ENCODE measurements at regions of chr4 and their contacts with region 1.

Region 1: DNA sequence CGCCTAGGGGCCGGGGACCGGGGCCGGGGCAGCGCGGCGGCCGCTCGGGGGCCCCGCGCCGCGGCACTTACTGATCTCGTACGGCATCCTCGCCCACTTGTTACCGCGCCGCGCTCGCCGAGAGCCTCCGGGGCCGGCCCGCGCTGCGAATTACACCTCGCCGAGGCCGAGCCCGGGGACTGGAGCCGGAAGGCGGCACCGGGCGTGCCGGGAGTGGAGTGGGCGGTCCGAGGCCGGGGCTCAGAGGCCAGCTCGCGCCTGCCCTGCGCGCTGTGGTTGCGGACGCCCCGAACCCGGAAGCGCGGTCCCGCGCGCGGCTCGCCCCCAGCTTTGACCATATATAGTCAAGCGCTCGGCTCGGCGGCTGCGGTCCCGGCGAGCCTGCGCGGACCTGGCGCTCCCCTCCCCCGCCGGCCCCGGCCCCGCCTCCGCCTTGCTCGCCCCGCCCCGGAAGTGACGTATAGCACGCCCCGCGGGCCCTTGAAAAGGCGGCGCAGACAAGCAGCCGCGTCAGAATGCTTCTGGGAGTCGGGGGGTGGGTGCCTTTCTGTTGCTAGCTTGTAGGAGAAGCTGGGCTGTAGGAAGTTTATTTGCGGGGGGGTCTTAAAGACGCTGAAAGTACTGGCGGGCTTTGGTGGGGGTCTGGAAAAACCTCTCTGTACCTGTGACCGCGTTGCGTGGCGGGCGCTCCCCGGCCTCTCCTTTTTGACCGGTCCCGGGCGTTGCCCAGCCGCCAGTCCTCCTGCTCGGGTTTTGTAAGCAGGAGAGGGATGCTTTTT is at the start of gene WDR1:
- DNase-seq: peak; percentile 95
- H3K4me3 ChIP-seq: peak within 1 kb of the TSS; percentile 79 to 88 (median 84)
- H3K27ac ChIP-seq: peak within 1 kb of the TSS; percentile 78
- H3K4me1 ChIP-seq: peaks cover 34% of the 10 kb centered on the region
- H3K27me3 ChIP-seq: no peaks in the 10 kb centered on the region
- CTCF ChIP-seq: no peak
- total RNA-seq, gene WDR1: 384 to 470 TPM

Region 2: DNA sequence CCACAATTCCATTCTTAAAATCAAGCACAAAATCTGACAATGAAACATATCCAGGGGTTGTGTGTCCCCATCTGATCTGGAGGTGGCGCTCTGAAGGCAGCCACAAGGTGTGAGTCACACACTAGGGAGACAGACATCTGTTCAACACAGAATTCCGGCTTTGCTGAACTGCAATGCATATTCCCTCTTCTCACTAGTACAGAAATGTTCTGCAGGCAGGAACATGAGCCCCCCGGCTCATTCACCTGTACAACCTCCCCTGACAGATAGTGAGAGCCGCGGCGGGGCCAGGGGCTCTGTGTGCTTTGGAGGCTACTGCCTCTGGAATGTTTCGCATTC is 42.0 kb before region 1 on chr4:
- CTCF ChIA-PET with region 1: no interaction called
- dilution Hi-C with region 1: no loop called
- in situ Hi-C with region 1: no loop called
- intact Hi-C with region 1: loop called (anchors 2 kb)
- DNase-seq: peak; percentile 46
- H3K4me3 ChIP-seq: no peak overlapping the region
- H3K27ac ChIP-seq: no peak overlapping the region
- H3K4me1 ChIP-seq: no peaks in the 10 kb centered on the region
- H3K27me3 ChIP-seq: no peaks in the 10 kb centered on the region
- CTCF ChIP-seq: peak; percentile 63 to 65

Region 3: GRCh38 chr4:10096201-10096977 is 20.4 kb before region 1 on chr4:
- CTCF ChIA-PET with region 1: no interaction called
- dilution Hi-C with region 1: no loop called
- in situ Hi-C with region 1: no loop called
- intact Hi-C with region 1: loop called (anchors 1 kb)
- DNase-seq: peak; percentile 97
- H3K4me3 ChIP-seq: no peak overlapping the region
- H3K27ac ChIP-seq: peak overlapping the region; percentile 86
- H3K4me1 ChIP-seq: peaks cover 84% of the 10 kb centered on the region
- H3K27me3 ChIP-seq: no peaks in the 10 kb centered on the region
- CTCF ChIP-seq: no peak

Region 4: DNA sequence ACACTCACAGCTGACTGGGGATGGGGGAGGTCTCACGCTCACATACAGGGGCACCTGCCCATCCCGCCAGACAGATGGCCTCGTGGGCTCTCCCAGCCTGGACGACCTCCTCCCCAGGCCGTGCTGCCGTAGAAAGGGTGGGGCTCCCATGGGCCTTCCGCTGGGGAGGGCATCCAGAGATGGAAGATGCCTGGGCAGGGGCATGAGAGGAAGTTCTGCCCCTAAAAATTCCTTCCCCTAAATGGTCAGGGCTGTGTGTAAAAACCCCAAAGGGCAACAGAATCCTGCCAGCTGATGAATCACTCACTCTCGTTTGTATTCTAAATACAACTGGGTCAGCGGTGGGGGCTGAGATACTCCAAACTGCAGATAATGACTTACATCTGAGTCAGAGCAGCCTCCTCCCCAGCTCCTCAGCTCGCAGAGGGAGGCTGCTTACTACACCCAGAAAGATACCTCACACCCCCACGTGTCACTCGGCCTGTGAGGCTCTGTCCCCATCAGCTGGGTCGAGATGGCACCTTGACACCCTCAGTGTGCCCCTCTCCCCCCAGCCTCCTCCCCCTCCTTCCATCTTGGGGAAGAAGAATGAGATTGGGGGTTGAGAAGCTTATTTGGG is 10.2 kb before region 1 on chr4:
- CTCF ChIA-PET with region 1: no interaction called
- dilution Hi-C with region 1: no loop called
- in situ Hi-C with region 1: no loop called
- intact Hi-C with region 1: loop called (anchors 1 kb)
- DNase-seq: peak; percentile 98
- H3K4me3 ChIP-seq: peak overlapping the region in 2 of 3 experiments; percentile 28 to 31
- H3K27ac ChIP-seq: peak overlapping the region; percentile 71
- H3K4me1 ChIP-seq: peaks cover 79% of the 10 kb centered on the region
- H3K27me3 ChIP-seq: no peaks in the 10 kb centered on the region
- CTCF ChIP-seq: no peak

Region 5: DNA sequence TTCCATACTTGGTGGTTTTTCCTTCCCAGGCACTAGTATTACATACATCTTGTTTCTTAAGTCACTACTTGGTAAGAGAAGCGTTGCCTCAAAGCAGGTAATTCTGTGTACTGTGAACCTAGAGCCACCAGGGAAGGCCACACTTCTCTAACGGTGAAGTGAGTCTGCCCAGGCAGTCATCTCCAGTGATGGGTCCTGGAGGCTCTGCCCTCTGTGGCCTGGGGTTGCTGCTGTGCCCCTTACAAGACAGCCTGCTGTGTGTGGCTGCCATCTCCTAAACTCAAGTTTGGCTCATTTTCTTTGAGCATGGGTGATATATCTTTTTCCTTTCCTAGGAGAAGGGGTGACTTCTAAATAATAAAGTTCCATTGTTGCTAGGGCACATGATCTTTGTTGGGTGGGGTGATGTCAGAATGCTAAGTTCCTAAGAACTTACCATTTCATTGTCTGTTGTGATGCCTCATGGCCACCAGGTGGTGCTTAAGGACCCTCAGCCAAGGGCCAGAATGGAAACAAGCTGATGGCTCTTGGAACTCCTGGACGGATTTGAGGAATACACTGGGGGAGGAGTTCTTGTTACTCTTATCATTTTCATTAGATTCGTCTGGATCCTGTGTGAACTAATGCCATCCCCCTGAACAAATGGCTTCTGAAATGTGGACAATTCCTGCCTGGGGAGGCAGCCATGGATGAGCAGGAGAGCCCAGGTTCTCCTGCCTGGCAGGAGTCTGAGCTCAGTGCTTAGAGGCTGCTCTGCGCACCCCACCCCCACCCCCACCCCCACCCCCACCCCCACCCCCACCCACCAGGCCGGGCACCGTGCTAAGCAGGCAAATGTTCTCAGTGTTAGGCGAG is 40.9 kb after region 1 on chr4:
- CTCF ChIA-PET with region 1: interaction called, 10 read pairs
- dilution Hi-C with region 1: no loop called
- in situ Hi-C with region 1: no loop called
- intact Hi-C with region 1: no loop called
- DNase-seq: peak; percentile 71
- H3K4me3 ChIP-seq: no peak overlapping the region
- H3K27ac ChIP-seq: no peak overlapping the region
- H3K4me1 ChIP-seq: peaks cover 14% of the 10 kb centered on the region
- H3K27me3 ChIP-seq: no peaks in the 10 kb centered on the region
- CTCF ChIP-seq: peak; percentile 85 to 91

Region 6: GRCh38 chr4:10336471-10336870 is 219.7 kb after region 1 on chr4:
- CTCF ChIA-PET with region 1: no interaction called
- dilution Hi-C with region 1: no loop called
- in situ Hi-C with region 1: no loop called
- intact Hi-C with region 1: no loop called
- DNase-seq: peak; percentile 89
- H3K4me3 ChIP-seq: no peak overlapping the region
- H3K27ac ChIP-seq: peak overlapping the region; percentile 31
- H3K4me1 ChIP-seq: peaks cover 42% of the 10 kb centered on the region
- H3K27me3 ChIP-seq: no peaks in the 10 kb centered on the region
- CTCF ChIP-seq: no peak

Region 7: DNA sequence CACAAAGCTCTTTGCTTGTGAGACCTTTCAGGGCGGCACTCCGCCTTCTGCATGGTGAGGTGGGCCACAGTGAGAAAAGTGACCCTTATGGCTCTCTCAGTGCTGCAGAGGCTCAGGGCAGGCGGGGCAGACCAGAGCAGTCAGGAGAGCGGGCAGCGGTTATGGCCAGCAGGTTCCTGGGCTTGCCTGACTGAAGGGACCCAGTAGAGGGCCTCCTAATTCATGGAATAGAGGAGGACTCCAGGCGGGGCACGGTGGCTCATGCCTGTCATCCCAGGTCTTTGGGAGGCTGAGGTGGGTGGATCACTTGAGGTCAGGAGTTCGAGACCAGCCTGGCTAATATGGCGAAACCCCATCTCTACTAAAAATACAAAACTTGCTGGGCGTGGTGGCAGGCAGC is 476.4 kb after region 1 on chr4:
- CTCF ChIA-PET with region 1: no interaction called
- dilution Hi-C with region 1: no loop called
- in situ Hi-C with region 1: no loop called
- intact Hi-C with region 1: no loop called
- DNase-seq: no peak
- H3K4me3 ChIP-seq: no peak overlapping the region
- H3K27ac ChIP-seq: no peak overlapping the region
- H3K4me1 ChIP-seq: no peaks in the 10 kb centered on the region
- H3K27me3 ChIP-seq: no peaks in the 10 kb centered on the region
- CTCF ChIP-seq: no peak

Measured in mammary epithelial cell (primary cell).